ENCODE measurements at regions of chr11 and their contacts with region 1.

Region 1: GRCh38 chr11:22787551-22788162 is 41.9 kb downstream of the SVIP start:
- DNase-seq: no peak
- ATAC-seq: peak; percentile 52
- H3K4me3 ChIP-seq: no peak overlapping the region
- H3K27ac ChIP-seq: peak overlapping the region; percentile 63; the same call in 1 of the 2 replicates
- H3K4me1 ChIP-seq: peaks cover 13% of the 10 kb centered on the region
- H3K27me3 ChIP-seq: no peaks in the 10 kb centered on the region
- CTCF ChIP-seq: peak; percentile 60 to 81 (median 72)
- EP300 ChIP-seq: no peak
- POLR2A ChIP-seq: no peak
- RAD21 ChIP-seq: peak; percentile 90

Region 2: GRCh38 chr11:22337596-22338485 is 449.8 kb before region 1 on chr11 and contains the start of gene SLC17A6:
- CTCF ChIA-PET with region 1: interaction called, 44 read pairs
- POLR2A ChIA-PET with region 1: no interaction called
- RAD21 ChIA-PET with region 1: interaction called, 15 read pairs
- SMC1A ChIA-PET with region 1: interaction called, 18 read pairs
- in situ Hi-C with region 1: loop called (anchors 5 kb)
- intact Hi-C with region 1: loop called (anchors 1 kb)
- DNase-seq: no peak
- ATAC-seq: peak; percentile 76
- H3K4me3 ChIP-seq: no peak within 1 kb of the TSS
- H3K27ac ChIP-seq: no peak within 1 kb of the TSS
- H3K4me1 ChIP-seq: no peaks in the 10 kb centered on the region
- H3K27me3 ChIP-seq: peaks cover 15 to 24% of the 10 kb centered on the region in 2 experiments
- CTCF ChIP-seq: no peak
- EP300 ChIP-seq: no peak
- POLR2A ChIP-seq: no peak
- RAD21 ChIP-seq: no peak
- polyA plus RNA-seq, gene SLC17A6: not detected

Region 3: DNA sequence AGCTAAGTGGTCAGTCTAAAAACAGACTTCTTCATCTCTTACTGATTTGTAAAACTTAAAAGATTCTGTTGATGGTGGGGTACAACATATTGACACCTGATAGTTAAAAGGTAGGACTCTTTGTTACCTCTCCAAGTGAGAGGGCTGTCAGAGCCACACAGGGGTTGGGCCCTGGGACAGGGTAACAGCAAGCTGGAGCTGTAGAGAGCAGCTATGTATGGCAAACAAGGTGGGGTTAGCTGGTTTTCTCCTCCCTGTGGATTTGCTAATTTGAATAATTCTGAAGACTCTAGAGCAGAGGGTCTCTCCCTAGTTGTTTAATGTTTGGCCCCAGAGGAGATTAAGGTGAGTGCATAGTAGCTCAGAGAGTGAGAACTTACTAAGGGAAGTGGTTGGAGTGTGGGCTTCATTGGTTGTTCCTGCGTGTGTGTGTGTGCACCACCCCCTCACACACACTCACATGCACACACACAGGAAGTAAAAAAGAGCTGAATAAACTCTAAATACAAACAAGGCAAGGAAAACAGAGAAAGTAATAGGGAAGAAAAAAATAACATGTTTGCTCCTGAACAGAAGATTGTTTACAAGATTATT is 130.5 kb before region 1 on chr11:
- CTCF ChIA-PET with region 1: interaction called, 11 read pairs
- POLR2A ChIA-PET with region 1: interaction called, 3 read pairs
- RAD21 ChIA-PET with region 1: interaction called, 17 read pairs
- SMC1A ChIA-PET with region 1: interaction called, 19 read pairs
- in situ Hi-C with region 1: no loop called
- intact Hi-C with region 1: no loop called
- DNase-seq: no peak
- ATAC-seq: peak; percentile 92
- H3K4me3 ChIP-seq: no peak overlapping the region
- H3K27ac ChIP-seq: peak overlapping the region; percentile 42; the same call in 1 of the 2 replicates
- H3K4me1 ChIP-seq: peaks cover 6% of the 10 kb centered on the region
- H3K27me3 ChIP-seq: no peaks in the 10 kb centered on the region
- CTCF ChIP-seq: no peak
- EP300 ChIP-seq: peak in 1 of 2 experiments; percentile 46; a peak in 2 of 4 replicates
- POLR2A ChIP-seq: no peak
- RAD21 ChIP-seq: no peak

Region 4: DNA sequence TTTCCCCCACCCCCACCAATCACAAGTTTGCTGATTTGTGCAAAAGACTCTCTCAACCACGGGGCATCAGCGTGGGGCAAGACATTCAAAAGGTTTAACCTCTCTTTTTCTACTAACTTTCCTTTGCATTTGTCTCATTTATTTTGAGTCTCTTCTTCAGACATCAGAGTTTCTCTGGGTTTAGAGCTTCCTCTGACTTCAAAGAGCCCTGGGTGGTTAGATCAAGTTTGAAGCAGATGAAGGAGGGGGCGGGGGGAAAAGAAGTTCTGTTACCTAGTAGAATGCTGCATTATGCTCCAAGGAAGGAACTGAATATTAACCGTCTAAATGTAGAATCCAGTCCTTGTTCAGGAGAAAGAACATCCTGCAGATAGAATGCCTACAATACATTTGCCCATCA is 96.8 kb before region 1 on chr11:
- CTCF ChIA-PET with region 1: interaction called, 15 read pairs
- POLR2A ChIA-PET with region 1: interaction called, 3 read pairs
- RAD21 ChIA-PET with region 1: interaction called, 4 read pairs
- SMC1A ChIA-PET with region 1: interaction called, 5 read pairs
- in situ Hi-C with region 1: no loop called
- intact Hi-C with region 1: no loop called
- DNase-seq: no peak
- ATAC-seq: peak; percentile 32
- H3K4me3 ChIP-seq: no peak overlapping the region
- H3K27ac ChIP-seq: no peak overlapping the region
- H3K4me1 ChIP-seq: no peaks in the 10 kb centered on the region
- H3K27me3 ChIP-seq: no peaks in the 10 kb centered on the region
- CTCF ChIP-seq: no peak
- EP300 ChIP-seq: no peak
- POLR2A ChIP-seq: no peak
- RAD21 ChIP-seq: no peak

Region 5: GRCh38 chr11:22730319-22730718 is 57.3 kb before region 1 on chr11:
- CTCF ChIA-PET with region 1: interaction called, 31 read pairs
- POLR2A ChIA-PET with region 1: interaction called, 3 read pairs
- RAD21 ChIA-PET with region 1: interaction called, 59 read pairs
- SMC1A ChIA-PET with region 1: interaction called, 49 read pairs
- in situ Hi-C with region 1: no loop called
- intact Hi-C with region 1: loop called (anchors 2 kb)
- DNase-seq: no peak
- ATAC-seq: peak; percentile 88
- H3K4me3 ChIP-seq: no peak overlapping the region
- H3K27ac ChIP-seq: no peak overlapping the region
- H3K4me1 ChIP-seq: no peaks in the 10 kb centered on the region
- H3K27me3 ChIP-seq: no peaks in the 10 kb centered on the region
- CTCF ChIP-seq: peak; percentile 4 to 53 (median 9); a peak in 2 of 6 replicates
- EP300 ChIP-seq: no peak
- POLR2A ChIP-seq: no peak
- RAD21 ChIP-seq: peak; percentile 58

Region 6: DNA sequence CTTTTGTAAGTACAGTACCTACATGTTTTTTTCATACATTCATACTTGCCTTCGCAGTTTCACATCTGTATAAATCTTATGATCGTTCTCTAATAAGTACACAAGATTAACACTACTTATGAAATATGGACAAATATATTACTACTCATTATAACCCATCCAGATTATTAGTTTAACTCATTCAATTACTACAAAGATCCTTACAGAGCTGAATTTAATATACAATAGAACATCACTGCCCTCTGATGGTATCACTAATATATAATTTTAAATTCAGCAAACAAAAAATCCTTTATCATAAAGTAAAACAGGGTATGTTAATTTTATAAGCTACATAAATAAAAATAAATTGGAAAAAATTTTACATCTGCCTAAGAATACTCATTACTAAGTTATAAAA is 34.5 kb after region 1 on chr11:
- CTCF ChIA-PET with region 1: interaction called, 42 read pairs
- POLR2A ChIA-PET with region 1: no interaction called
- RAD21 ChIA-PET with region 1: interaction called, 10 read pairs
- SMC1A ChIA-PET with region 1: interaction called, 11 read pairs
- in situ Hi-C with region 1: no loop called
- intact Hi-C with region 1: no loop called
- DNase-seq: no peak
- ATAC-seq: no peak
- H3K4me3 ChIP-seq: no peak overlapping the region
- H3K27ac ChIP-seq: no peak overlapping the region
- H3K4me1 ChIP-seq: no peaks in the 10 kb centered on the region
- H3K27me3 ChIP-seq: no peaks in the 10 kb centered on the region
- CTCF ChIP-seq: no peak
- EP300 ChIP-seq: no peak
- POLR2A ChIP-seq: no peak
- RAD21 ChIP-seq: no peak

Region 7: GRCh38 chr11:22859756-22860155 is 72.1 kb after region 1 on chr11:
- CTCF ChIA-PET with region 1: no interaction called
- POLR2A ChIA-PET with region 1: no interaction called
- RAD21 ChIA-PET with region 1: no interaction called
- SMC1A ChIA-PET with region 1: no interaction called
- in situ Hi-C with region 1: no loop called
- intact Hi-C with region 1: no loop called
- DNase-seq: no peak
- ATAC-seq: no peak; the same call in 2 of the 3 replicates
- H3K4me3 ChIP-seq: no peak overlapping the region
- H3K27ac ChIP-seq: no peak overlapping the region
- H3K4me1 ChIP-seq: no peaks in the 10 kb centered on the region
- H3K27me3 ChIP-seq: no peaks in the 10 kb centered on the region
- CTCF ChIP-seq: no peak
- EP300 ChIP-seq: no peak
- POLR2A ChIP-seq: no peak
- RAD21 ChIP-seq: no peak

Region 8: GRCh38 chr11:22903782-22904181 is 116.1 kb after region 1 on chr11:
- CTCF ChIA-PET with region 1: no interaction called
- POLR2A ChIA-PET with region 1: no interaction called
- RAD21 ChIA-PET with region 1: no interaction called
- SMC1A ChIA-PET with region 1: no interaction called
- in situ Hi-C with region 1: no loop called
- intact Hi-C with region 1: no loop called
- DNase-seq: no peak
- ATAC-seq: peak; percentile 55
- H3K4me3 ChIP-seq: no peak overlapping the region
- H3K27ac ChIP-seq: no peak overlapping the region
- H3K4me1 ChIP-seq: no peaks in the 10 kb centered on the region
- H3K27me3 ChIP-seq: no peaks in the 10 kb centered on the region
- CTCF ChIP-seq: no peak
- EP300 ChIP-seq: no peak
- POLR2A ChIP-seq: no peak
- RAD21 ChIP-seq: no peak